Activated CD8-positive, alpha-beta memory T cell treated with anti-CD3 and anti-CD28 coated beads, Interleukin-2, amount 10 ng/mL, durations not matched to agents 7 days and 5 days (primary cell): ENCODE measurements at regions of chr6 and their contacts with region 1.

Region 1: DNA sequence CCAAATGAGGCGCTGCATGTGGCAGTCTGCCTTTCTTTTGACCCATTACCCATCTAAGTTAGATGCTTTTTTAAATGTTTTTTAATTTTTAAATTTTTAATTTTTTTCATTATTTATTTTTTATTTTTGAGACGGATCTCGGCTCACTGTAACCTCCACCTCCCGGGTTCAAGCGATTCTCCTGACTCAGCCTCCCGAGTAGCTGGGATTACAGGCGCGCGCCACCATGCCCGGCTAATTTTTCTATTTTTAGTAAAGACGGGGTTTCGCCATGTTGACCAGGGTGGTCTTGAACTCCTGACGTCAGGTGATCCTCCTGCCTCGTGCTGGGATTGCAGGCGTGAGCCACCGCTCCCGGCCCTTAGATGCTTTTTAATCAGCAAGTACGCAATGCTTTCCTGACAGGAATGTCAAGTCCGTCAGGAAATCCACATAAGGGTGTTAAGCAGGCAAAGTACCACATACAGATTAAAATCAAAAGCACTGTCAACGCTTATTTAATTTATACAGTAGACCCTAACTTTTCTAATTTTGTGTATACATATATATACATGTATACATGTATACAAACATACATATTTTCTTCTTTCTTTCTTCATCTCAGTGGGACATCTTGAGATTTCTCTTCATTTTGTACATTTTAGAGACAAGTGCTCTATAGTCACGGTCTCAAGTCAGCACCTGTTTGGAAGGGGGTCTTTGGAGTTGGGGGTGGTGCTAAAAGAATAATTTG is 995 bp upstream of the GSTA4 start:
- DNase-seq: peak; percentile 48
- ATAC-seq: no peak
- H3K4me3 Mint-ChIP-seq: peak overlapping the region; percentile 95
- H3K27ac Mint-ChIP-seq: peak overlapping the region; percentile 96
- H3K4me1 Mint-ChIP-seq: peaks cover 28% of the 10 kb centered on the region
- H3K27me3 Mint-ChIP-seq: peaks cover 14% of the 10 kb centered on the region

Region 2: GRCh38 chr6:52984247-52984646 is 11.8 kb before region 1 on chr6:
- CTCF ChIA-PET with region 1: interaction called, 20 read pairs
- DNase-seq: peak; percentile 79
- ATAC-seq: peak; percentile 81
- H3K4me3 Mint-ChIP-seq: peak overlapping the region; percentile 38
- H3K27ac Mint-ChIP-seq: peak overlapping the region; percentile 68
- H3K4me1 Mint-ChIP-seq: peaks cover 33% of the 10 kb centered on the region
- H3K27me3 Mint-ChIP-seq: peaks cover 14% of the 10 kb centered on the region

Region 3: DNA sequence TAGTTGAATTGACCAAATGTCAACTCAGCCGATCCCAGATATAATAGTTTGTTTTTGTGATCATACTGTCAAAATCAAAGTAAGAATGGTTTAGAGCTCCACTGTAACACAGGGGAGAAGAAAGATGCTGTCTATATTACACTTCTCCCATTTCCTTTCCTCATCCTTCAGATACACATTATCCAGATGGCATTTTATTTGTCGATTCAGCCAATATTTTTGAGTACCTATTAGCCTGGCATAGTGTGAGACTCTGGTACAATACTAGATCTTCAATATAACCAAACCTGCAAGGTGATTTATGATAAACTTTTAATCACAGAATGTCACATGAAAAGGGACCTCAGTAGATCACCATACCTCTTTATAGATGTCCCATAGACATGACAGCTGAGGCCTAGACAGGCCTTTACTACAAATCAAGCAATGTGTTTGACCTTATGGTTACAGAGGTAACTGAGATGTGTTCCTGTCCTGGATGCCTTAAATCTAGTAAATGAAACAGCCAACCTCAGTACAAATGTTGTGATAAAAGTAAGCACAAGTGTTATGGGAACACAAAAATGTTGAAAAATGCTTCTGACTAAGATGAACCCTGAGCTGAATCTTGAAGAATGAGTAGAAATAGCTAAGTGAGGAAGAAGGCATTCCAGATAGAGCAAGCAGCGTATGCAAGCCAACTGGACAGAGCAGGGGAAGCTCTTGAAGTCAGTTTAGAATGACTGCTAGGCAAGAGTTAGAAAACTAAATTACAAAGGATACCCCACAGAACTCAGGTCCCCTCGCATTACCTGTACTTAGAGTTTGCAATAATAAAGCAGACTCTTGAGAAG is 71.0 kb after region 1 on chr6:
- CTCF ChIA-PET with region 1: interaction called, 12 read pairs
- DNase-seq: no peak
- ATAC-seq: no peak
- H3K4me3 Mint-ChIP-seq: peak overlapping the region; percentile 97
- H3K27ac Mint-ChIP-seq: peak overlapping the region; percentile 9
- H3K4me1 Mint-ChIP-seq: peaks cover 46% of the 10 kb centered on the region
- H3K27me3 Mint-ChIP-seq: no peaks in the 10 kb centered on the region